ENCODE measurements at regions of chr10 and their contacts with region 1.

Region 1: DNA sequence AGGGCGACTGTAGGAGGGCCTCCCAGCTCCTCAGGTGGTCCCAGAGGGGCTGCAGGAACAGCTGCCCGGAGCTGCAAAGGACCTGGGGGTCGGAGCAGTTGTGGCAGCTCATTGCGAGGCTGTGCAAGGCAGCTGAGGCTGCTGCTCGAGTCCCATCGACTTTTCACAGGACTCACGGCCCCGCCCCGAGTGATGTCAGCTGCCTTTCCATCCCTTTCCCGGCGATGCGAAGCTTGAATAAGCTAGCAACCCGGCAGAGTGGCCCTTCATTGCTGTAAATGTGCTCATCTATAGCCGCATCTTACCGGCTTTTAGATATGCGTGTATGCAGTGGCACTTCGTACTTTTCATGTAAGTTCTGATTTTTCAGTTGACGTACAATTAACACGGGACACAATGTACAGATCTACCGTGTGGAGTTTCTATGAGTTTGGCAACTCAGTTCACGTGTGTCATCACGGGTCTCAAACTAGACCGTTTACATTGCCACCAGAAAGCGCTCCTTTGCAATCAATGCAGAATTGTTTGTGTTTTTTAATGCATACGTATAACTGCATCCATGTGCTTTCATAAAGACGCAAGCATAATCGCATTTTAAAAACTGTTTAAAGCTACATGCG is at the start of gene CH25H:
- DNase-seq: peak; percentile 57
- H3K4me3 Mint-ChIP-seq: peak within 1 kb of the TSS; percentile 61
- H3K27ac Mint-ChIP-seq: peak within 1 kb of the TSS; percentile 24
- H3K4me1 Mint-ChIP-seq: peaks cover 17% of the 10 kb centered on the region
- H3K27me3 Mint-ChIP-seq: peaks cover 56% of the 10 kb centered on the region

Region 2: DNA sequence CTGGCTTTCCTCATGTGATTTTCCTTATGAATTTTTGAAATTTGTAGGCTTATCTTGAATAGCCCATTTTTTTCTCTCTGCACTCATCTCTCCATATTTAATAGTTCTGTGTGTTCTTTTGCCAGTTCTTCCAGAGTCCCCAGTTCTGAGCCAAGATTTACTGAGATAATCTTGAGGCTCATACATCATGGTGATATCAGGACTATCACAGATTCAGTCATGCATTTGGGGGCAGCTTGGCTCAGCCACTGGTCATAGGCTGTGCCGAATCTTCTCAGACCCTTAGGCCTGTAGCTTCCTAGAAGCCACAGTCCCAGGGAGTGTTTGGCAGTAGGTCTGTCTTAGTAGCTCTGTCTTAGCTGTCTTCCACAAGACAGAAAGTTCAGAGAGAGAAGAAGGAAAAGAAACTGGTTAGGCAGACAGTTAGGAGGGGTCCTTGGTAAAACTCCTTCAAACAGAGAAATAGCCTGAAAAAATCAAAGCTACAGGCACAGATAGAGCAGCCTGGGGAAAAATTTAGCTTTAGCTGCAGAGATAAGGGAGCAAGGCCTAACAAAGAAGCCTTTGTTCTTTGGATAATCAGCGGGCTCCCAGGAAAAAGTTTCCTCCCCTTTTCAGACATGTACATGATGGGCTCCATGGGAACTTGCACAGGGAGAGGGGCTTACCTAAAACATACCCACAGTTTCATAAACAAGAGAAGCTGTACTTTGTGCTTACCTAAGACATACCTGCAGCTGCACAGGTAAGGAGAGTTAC is 187.5 kb before region 1 on chr10:
- CTCF ChIA-PET with region 1: no interaction called
- DNase-seq: no peak
- H3K4me3 Mint-ChIP-seq: no peak overlapping the region
- H3K27ac Mint-ChIP-seq: no peak overlapping the region
- H3K4me1 Mint-ChIP-seq: no peaks in the 10 kb centered on the region
- H3K27me3 Mint-ChIP-seq: no peaks in the 10 kb centered on the region

Region 3: GRCh38 chr10:89029785-89030437 is 177.4 kb before region 1 on chr10:
- CTCF ChIA-PET with region 1: interaction called, 63 read pairs
- DNase-seq: peak; percentile 81
- H3K4me3 Mint-ChIP-seq: no peak overlapping the region
- H3K27ac Mint-ChIP-seq: no peak overlapping the region
- H3K4me1 Mint-ChIP-seq: peaks cover 11% of the 10 kb centered on the region
- H3K27me3 Mint-ChIP-seq: peaks cover 2% of the 10 kb centered on the region

Region 4: GRCh38 chr10:89217057-89217990 is 10.0 kb after region 1 on chr10:
- CTCF ChIA-PET with region 1: interaction called, 22 read pairs
- DNase-seq: peak; percentile 71
- H3K4me3 Mint-ChIP-seq: no peak overlapping the region
- H3K27ac Mint-ChIP-seq: peak overlapping the region; percentile 64
- H3K4me1 Mint-ChIP-seq: peaks cover 13% of the 10 kb centered on the region
- H3K27me3 Mint-ChIP-seq: no peaks in the 10 kb centered on the region

Measured in activated naive CD4-positive, alpha-beta T cell treated with anti-CD3 and anti-CD28 coated beads, Interleukin-2, amount 10 ng/mL, durations not matched to agents 7 days and 5 days (primary cell).